Activated CD4-positive, alpha-beta T cell treated with anti-CD3 and anti-CD28 coated beads, Interleukin-2, amount 10 ng/mL, durations not matched to agents 24 days and 14 days (primary cell): ENCODE measurements at regions of chr10 and their contacts with region 1.

Region 1: GRCh38 chr10:63227207-63227915 is 94.2 kb downstream of the NRBF2 start:
- DNase-seq: peak; percentile 57
- H3K4me3 Mint-ChIP-seq: peak overlapping the region; percentile 71
- H3K27ac Mint-ChIP-seq: peak overlapping the region; percentile 81
- H3K4me1 Mint-ChIP-seq: peaks cover 31% of the 10 kb centered on the region
- H3K27me3 Mint-ChIP-seq: no peaks in the 10 kb centered on the region

Region 2: GRCh38 chr10:63210611-63211196 is 16.7 kb before region 1 on chr10:
- intact Hi-C with region 1: loop called (anchors 2 kb)
- DNase-seq: peak; percentile 50
- H3K4me3 Mint-ChIP-seq: no peak overlapping the region
- H3K27ac Mint-ChIP-seq: peak overlapping the region; percentile 25
- H3K4me1 Mint-ChIP-seq: peaks cover 55% of the 10 kb centered on the region
- H3K27me3 Mint-ChIP-seq: no peaks in the 10 kb centered on the region

Region 3: GRCh38 chr10:63217120-63217605 is 10.2 kb before region 1 on chr10:
- intact Hi-C with region 1: loop called (anchors 1 kb)
- DNase-seq: peak; percentile 75
- H3K4me3 Mint-ChIP-seq: peak overlapping the region; percentile 15
- H3K27ac Mint-ChIP-seq: no peak overlapping the region
- H3K4me1 Mint-ChIP-seq: peaks cover 46% of the 10 kb centered on the region
- H3K27me3 Mint-ChIP-seq: no peaks in the 10 kb centered on the region

Region 4: GRCh38 chr10:63355682-63356081 is 128.3 kb after region 1 on chr10:
- intact Hi-C with region 1: loop called (anchors 5 kb)
- DNase-seq: no peak
- H3K4me3 Mint-ChIP-seq: no peak overlapping the region
- H3K27ac Mint-ChIP-seq: peak overlapping the region; percentile 63
- H3K4me1 Mint-ChIP-seq: peaks cover 14% of the 10 kb centered on the region
- H3K27me3 Mint-ChIP-seq: no peaks in the 10 kb centered on the region

Region 5: GRCh38 chr10:63521416-63522276 is 294.3 kb after region 1 on chr10:
- intact Hi-C with region 1: loop called (anchors 5 kb)
- DNase-seq: peak; percentile 87
- H3K4me3 Mint-ChIP-seq: peak overlapping the region; percentile 91
- H3K27ac Mint-ChIP-seq: peak overlapping the region; percentile 94
- H3K4me1 Mint-ChIP-seq: peaks cover 52% of the 10 kb centered on the region
- H3K27me3 Mint-ChIP-seq: no peaks in the 10 kb centered on the region